PC-3 (cell line): ENCODE measurements at regions of chr2 and their contacts with region 1.

Region 1: GRCh38 chr2:156908825-156909224 is 348.7 kb upstream of the GALNT5 start:
- DNase-seq: peak; percentile 89
- ATAC-seq: peak; percentile 90
- H3K4me3 ChIP-seq: no peak overlapping the region
- H3K27ac ChIP-seq: peak overlapping the region; percentile 70
- H3K4me1 ChIP-seq: peaks cover 28% of the 10 kb centered on the region
- H3K27me3 ChIP-seq: no peaks in the 10 kb centered on the region
- CTCF ChIP-seq: no peak

Region 2: DNA sequence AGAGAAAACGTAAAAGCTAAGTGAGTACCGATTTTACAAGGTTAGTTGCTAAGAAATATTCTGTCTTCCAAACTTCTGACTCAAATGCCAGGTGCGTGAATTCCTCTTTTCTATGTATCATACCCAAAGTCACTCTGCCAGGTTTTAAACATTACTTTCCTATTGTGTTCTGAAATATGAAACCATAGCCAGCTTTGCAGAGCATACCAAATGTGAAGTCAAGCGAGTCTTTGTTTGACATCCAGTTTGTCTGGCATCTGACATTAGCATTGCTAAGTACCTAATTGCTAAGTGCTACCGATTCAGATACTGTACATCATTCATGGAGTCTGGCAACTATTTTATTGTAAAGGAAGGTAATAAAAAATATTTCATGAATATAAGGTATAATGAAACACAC is 26.8 kb after region 1 on chr2:
- CTCF ChIA-PET with region 1: no interaction called
- POLR2A ChIA-PET with region 1: no interaction called
- intact Hi-C with region 1: loop called (anchors 1 kb)
- DNase-seq: peak; percentile 98
- ATAC-seq: peak; percentile 95
- H3K4me3 ChIP-seq: no peak overlapping the region; the same call in 1 of the 2 replicates
- H3K27ac ChIP-seq: peak overlapping the region; percentile 60
- H3K4me1 ChIP-seq: peaks cover 37% of the 10 kb centered on the region
- H3K27me3 ChIP-seq: no peaks in the 10 kb centered on the region
- CTCF ChIP-seq: no peak